ENCODE measurements at regions of chr6 and their contacts with region 1.

Region 1: DNA sequence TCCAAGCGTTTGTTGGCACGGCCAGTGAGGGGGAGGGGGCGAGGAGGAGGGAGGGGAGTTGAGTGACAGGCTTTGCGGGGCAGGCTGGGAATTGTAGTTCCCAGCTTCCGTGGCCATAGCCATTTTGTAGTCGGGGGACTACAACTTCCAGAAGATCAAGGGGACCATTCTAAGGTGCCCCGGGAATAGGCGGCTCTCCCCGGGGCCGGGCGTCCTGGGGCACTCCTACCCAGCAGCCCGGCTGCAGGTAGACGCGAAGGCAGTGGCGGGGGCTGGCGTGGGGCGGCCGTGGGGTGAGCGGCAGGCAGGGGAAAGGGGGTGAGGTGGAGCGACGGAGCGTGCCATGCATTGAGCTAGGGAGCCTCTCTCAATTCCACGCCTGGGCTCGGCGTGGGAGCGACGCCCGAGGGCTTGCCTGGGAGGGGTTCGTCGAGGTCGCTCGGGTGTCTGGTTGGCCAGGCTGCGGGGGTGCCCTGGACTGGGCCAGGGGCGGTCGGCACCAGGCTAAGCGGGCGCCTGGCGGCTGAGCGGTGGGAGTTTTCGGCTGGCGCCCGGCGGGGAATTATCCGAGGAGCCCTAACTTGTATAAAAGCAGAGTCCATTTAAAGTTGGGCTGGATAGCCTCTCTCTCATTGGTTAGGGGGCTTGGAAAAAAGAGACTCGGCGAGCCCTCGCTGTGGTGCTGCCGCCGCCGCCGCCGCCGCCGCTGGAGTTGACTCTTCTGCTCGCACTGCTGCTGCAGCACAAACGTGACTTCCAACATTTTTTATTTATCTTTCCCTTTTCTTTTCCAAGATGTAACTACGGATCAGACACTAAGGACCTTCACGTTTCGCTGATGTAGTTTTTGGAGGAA is at the start of gene JARID2:
- DNase-seq: peak; percentile 87 to 98 (median 93)
- ATAC-seq: peak; percentile 39
- H3K4me3 ChIP-seq: peak within 1 kb of the TSS; percentile 94
- H3K4me3 Mint-ChIP-seq: peak within 1 kb of the TSS; percentile 100
- H3K27ac ChIP-seq: peak within 1 kb of the TSS; percentile 81 to 92
- H3K27ac Mint-ChIP-seq: peak within 1 kb of the TSS; percentile 97
- H3K4me1 ChIP-seq: peaks cover 25% of the 10 kb centered on the region
- H3K4me1 Mint-ChIP-seq: peaks cover 24% of the 10 kb centered on the region
- H3K27me3 ChIP-seq: no peaks in the 10 kb centered on the region
- H3K27me3 Mint-ChIP-seq: peaks cover 4% of the 10 kb centered on the region
- CTCF ChIP-seq: no peak
- total RNA-seq, gene JARID2: 32.0 to 33.0 TPM

Region 2: GRCh38 chr6:13574149-13574570 is 1671.4 kb before region 1 on chr6:
- CTCF ChIA-PET with region 1: no interaction called
- POLR2A ChIA-PET with region 1: interaction called, 4 read pairs
- intact Hi-C with region 1: loop called in 1 of 2 experiments (anchors 2 kb)
- DNase-seq: peak; percentile 85 to 98 (median 91)
- ATAC-seq: peak; percentile 79
- H3K4me3 ChIP-seq: peak overlapping the region; percentile 97
- H3K4me3 Mint-ChIP-seq: peak overlapping the region; percentile 98
- H3K27ac ChIP-seq: peak overlapping the region; percentile 82 to 86
- H3K27ac Mint-ChIP-seq: peak overlapping the region; percentile 99
- H3K4me1 ChIP-seq: peaks cover 14% of the 10 kb centered on the region
- H3K4me1 Mint-ChIP-seq: peaks cover 34% of the 10 kb centered on the region
- H3K27me3 ChIP-seq: no peaks in the 10 kb centered on the region
- H3K27me3 Mint-ChIP-seq: no peaks in the 10 kb centered on the region
- CTCF ChIP-seq: peak; percentile 72

Region 3: DNA sequence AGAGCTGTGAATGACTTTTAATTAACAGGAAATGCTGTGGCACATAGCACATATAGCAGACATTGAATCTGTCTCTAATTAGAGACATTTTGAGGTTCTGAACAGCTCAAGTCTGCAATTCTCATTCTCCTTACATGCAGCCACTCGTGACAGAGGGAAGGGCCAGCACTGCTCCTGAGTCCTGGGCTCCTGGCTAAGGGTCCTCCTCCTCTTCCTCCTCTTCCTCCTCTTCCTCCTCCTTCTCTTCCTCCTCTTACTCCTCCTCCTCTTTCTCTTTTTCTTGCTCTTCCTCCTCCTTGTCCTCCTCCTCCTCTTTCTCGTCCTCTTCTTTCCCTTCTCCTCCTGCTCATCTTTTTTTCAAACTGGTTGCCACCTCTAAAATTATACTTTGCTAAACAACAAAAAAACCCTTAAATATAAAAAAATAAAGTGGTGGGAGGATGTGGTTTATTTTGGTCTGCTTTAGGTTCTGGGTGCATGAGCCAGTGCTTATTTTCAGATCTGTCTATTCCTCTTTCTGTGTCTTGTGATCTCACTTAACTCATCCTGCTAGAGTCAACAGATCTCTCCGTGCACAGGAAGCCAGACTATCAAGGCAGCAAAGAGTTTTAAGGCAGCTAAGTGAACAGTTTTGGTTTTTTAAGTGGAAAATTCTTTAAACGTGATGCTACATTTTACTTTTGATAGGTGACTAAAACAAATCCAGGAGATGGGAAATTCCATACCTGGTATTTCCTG is 968.8 kb before region 1 on chr6:
- CTCF ChIA-PET with region 1: no interaction called
- POLR2A ChIA-PET with region 1: interaction called, 4 read pairs
- intact Hi-C with region 1: loop called in 1 of 2 experiments (anchors 5 kb)
- DNase-seq: peak in 9 of 14 experiments; percentile 27 to 85 (median 51)
- ATAC-seq: peak; percentile 98
- H3K4me3 ChIP-seq: peak overlapping the region; percentile 15
- H3K4me3 Mint-ChIP-seq: peak overlapping the region; percentile 68
- H3K27ac ChIP-seq: peak overlapping the region; percentile 52 to 63
- H3K27ac Mint-ChIP-seq: peak overlapping the region; percentile 85
- H3K4me1 ChIP-seq: peaks cover 38% of the 10 kb centered on the region
- H3K4me1 Mint-ChIP-seq: peaks cover 70% of the 10 kb centered on the region
- H3K27me3 ChIP-seq: no peaks in the 10 kb centered on the region
- H3K27me3 Mint-ChIP-seq: no peaks in the 10 kb centered on the region
- CTCF ChIP-seq: no peak

Region 4: GRCh38 chr6:15293674-15294073 is 48.1 kb after region 1 on chr6:
- CTCF ChIA-PET with region 1: no interaction called
- POLR2A ChIA-PET with region 1: interaction called, 4 read pairs
- intact Hi-C with region 1: loop called in 1 of 2 experiments (anchors 5 kb)
- DNase-seq: no peak
- ATAC-seq: no peak
- H3K4me3 ChIP-seq: no peak overlapping the region
- H3K4me3 Mint-ChIP-seq: no peak overlapping the region
- H3K27ac ChIP-seq: no peak overlapping the region
- H3K27ac Mint-ChIP-seq: no peak overlapping the region
- H3K4me1 ChIP-seq: peaks cover 40% of the 10 kb centered on the region
- H3K4me1 Mint-ChIP-seq: peaks cover 83% of the 10 kb centered on the region
- H3K27me3 ChIP-seq: no peaks in the 10 kb centered on the region
- H3K27me3 Mint-ChIP-seq: no peaks in the 10 kb centered on the region
- CTCF ChIP-seq: no peak

Region 5: GRCh38 chr6:15340775-15341174 is 95.2 kb after region 1 on chr6:
- CTCF ChIA-PET with region 1: no interaction called
- POLR2A ChIA-PET with region 1: interaction called, 9 read pairs
- intact Hi-C with region 1: loop called in 1 of 2 experiments (anchors 5 kb)
- DNase-seq: peak in 1 of 14 experiments; percentile 38
- ATAC-seq: peak; percentile 64
- H3K4me3 ChIP-seq: no peak overlapping the region
- H3K4me3 Mint-ChIP-seq: peak overlapping the region; percentile 62
- H3K27ac ChIP-seq: peak overlapping the region in 1 of 2 donors; percentile 38
- H3K27ac Mint-ChIP-seq: peak overlapping the region; percentile 78
- H3K4me1 ChIP-seq: peaks cover 40% of the 10 kb centered on the region
- H3K4me1 Mint-ChIP-seq: peaks cover 87% of the 10 kb centered on the region
- H3K27me3 ChIP-seq: no peaks in the 10 kb centered on the region
- H3K27me3 Mint-ChIP-seq: no peaks in the 10 kb centered on the region
- CTCF ChIP-seq: no peak

Region 6: GRCh38 chr6:15441215-15441868 is 195.8 kb after region 1 on chr6:
- CTCF ChIA-PET with region 1: interaction called, 3 read pairs
- POLR2A ChIA-PET with region 1: interaction called, 3 read pairs
- intact Hi-C with region 1: loop called (anchors 2 to 5 kb)
- DNase-seq: peak in 11 of 14 experiments; percentile 7 to 73 (median 16)
- ATAC-seq: peak; percentile 69
- H3K4me3 ChIP-seq: no peak overlapping the region
- H3K4me3 Mint-ChIP-seq: no peak overlapping the region
- H3K27ac ChIP-seq: no peak overlapping the region
- H3K27ac Mint-ChIP-seq: no peak overlapping the region
- H3K4me1 ChIP-seq: peaks cover 21% of the 10 kb centered on the region
- H3K4me1 Mint-ChIP-seq: peaks cover 89% of the 10 kb centered on the region
- H3K27me3 ChIP-seq: no peaks in the 10 kb centered on the region
- H3K27me3 Mint-ChIP-seq: no peaks in the 10 kb centered on the region
- CTCF ChIP-seq: peak; percentile 86

Region 7: DNA sequence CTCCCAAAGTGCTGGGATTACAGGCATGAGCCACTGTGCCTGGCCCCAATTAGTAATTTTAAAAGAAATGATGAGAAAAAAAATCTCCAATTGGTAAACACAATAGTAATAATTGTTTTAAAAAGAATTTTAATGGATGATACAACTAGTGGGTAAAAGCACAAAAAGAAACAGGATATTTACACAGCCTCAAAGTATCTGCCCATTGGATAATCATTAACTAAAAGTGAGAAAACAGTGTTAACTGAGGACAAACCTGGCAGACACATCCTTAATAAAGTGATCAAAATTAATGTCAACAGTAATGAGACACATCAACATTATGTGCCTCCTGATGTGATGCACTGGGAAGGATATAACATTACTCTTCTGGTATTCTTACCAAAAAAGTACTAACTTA is 392.8 kb after region 1 on chr6:
- CTCF ChIA-PET with region 1: no interaction called
- POLR2A ChIA-PET with region 1: no interaction called
- intact Hi-C with region 1: no loop called
- DNase-seq: no peak
- ATAC-seq: no peak
- H3K4me3 ChIP-seq: no peak overlapping the region
- H3K4me3 Mint-ChIP-seq: no peak overlapping the region
- H3K27ac ChIP-seq: no peak overlapping the region
- H3K27ac Mint-ChIP-seq: no peak overlapping the region
- H3K4me1 ChIP-seq: no peaks in the 10 kb centered on the region
- H3K4me1 Mint-ChIP-seq: peaks cover 11% of the 10 kb centered on the region
- H3K27me3 ChIP-seq: no peaks in the 10 kb centered on the region
- H3K27me3 Mint-ChIP-seq: no peaks in the 10 kb centered on the region
- CTCF ChIP-seq: no peak

Region 8: GRCh38 chr6:16319813-16320532 is 1074.4 kb after region 1 on chr6:
- CTCF ChIA-PET with region 1: no interaction called
- POLR2A ChIA-PET with region 1: no interaction called
- intact Hi-C with region 1: loop called in 1 of 2 experiments (anchors 5 kb)
- DNase-seq: peak; percentile 41 to 89 (median 62)
- ATAC-seq: peak; percentile 55
- H3K4me3 ChIP-seq: peak overlapping the region; percentile 40
- H3K4me3 Mint-ChIP-seq: peak overlapping the region; percentile 70
- H3K27ac ChIP-seq: peak overlapping the region; percentile 63 to 93
- H3K27ac Mint-ChIP-seq: peak overlapping the region; percentile 94
- H3K4me1 ChIP-seq: peaks cover 82% of the 10 kb centered on the region
- H3K4me1 Mint-ChIP-seq: peaks cover 78% of the 10 kb centered on the region
- H3K27me3 ChIP-seq: no peaks in the 10 kb centered on the region
- H3K27me3 Mint-ChIP-seq: no peaks in the 10 kb centered on the region
- CTCF ChIP-seq: no peak

Measured in CD4-positive, alpha-beta T cell (primary cell).